Activated CD8-positive, alpha-beta T cell treated with anti-CD3 and anti-CD28 coated beads for 36 hours (primary cell): ENCODE measurements at regions of chr19 and their contacts with region 1.

Region 1: GRCh38 chr19:18058208-18059030 is 28.3 kb downstream of the IL12RB1 start:
- DNase-seq: peak; percentile 83
- ATAC-seq: peak; percentile 94
- H3K4me3 Mint-ChIP-seq: no peak overlapping the region
- H3K27ac Mint-ChIP-seq: peak overlapping the region; percentile 41
- H3K4me1 Mint-ChIP-seq: peaks cover 16% of the 10 kb centered on the region
- H3K27me3 Mint-ChIP-seq: no peaks in the 10 kb centered on the region
- CTCF ChIP-seq: peak; percentile 99

Region 2: DNA sequence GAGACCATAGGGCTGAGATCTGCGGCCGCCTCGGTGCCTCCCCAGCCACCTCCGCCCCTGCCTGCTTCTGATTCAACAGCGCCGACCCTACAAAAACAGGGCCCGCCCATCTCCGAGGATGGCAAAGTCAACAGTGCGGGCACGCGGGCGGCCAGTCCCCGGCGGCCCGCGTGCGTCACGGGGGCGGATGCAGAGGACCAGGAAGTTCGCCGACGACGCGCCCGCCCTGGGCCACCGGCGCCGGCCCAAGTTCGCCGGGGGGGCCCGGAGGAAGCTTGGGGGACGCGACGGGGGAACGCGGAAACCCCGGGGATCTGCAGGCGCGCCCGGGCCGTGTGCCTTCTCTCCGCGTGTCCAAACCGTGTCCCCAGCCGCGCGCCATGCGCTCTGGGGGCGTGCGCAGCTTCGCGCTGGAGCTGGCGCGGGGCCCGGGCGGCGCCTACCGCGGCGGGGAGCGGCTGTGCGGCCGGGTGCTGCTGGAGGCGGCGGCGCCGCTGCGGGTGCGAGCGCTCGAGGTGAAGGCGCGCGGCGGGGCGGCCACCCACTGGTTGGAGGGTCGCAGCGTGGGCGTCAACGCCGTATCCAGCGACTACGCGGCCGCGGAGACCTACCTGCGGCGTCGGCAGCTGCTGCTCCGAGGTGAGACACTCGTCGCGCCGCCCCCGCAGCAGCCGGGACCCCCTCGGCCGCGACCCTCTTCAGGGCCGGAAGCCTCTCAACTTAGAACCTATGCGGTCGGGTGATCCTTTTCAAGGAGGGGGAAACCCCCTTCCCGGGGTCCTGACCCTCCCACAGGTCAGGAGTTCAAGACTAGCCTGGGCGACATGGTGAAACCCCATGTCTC is 57.3 kb before region 1 on chr19:
- CTCF ChIA-PET with region 1: interaction called, 151 read pairs
- POLR2A ChIA-PET with region 1: interaction called, 24 read pairs
- intact Hi-C with region 1: no loop called
- DNase-seq: peak; percentile 98
- ATAC-seq: peak; percentile 86
- H3K4me3 Mint-ChIP-seq: peak overlapping the region; percentile 90
- H3K27ac Mint-ChIP-seq: peak overlapping the region; percentile 98
- H3K4me1 Mint-ChIP-seq: peaks cover 18% of the 10 kb centered on the region
- H3K27me3 Mint-ChIP-seq: no peaks in the 10 kb centered on the region
- CTCF ChIP-seq: no peak

Region 3: DNA sequence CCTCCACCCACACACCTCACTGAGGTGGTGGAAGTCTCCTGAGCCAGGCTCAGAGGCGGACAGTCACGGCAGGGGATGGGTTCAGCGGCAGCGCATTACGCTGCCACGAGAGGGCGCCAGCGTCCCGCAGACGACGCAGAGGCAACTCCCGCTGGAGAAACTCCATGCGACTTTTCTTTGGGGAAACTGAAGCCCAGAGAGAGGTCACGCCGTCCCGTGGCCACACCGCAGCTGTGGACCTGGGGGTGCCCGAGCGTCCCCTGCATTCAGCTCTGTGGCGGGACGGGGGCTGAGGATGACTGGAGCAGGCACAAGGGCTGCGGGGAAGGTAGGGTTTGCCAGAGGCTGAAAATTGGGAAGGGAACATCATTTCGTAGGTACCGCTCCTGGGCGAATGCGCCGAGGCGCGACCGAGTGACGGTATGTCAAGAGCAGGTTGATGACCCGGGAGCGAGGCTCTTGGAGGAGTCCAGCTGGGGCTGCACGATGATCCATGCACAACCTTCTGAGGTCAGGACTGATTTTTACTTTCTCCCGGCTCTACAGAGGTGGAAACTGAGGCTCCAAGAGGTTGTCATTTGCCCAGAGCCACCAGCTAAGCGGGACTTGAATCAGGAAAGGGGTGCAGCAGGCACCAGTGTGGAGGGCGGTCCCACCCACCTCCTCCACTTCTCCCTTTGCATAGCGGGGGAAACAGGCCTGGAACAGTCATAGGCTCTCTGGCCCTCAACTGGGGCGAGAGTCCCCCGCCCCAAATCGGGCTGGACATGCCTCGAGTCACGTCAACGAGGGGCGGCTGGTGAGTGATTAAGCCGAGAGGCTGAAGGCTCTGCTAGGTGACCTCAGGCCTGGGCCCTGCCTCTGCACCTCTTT is 51.1 kb before region 1 on chr19:
- CTCF ChIA-PET with region 1: interaction called, 151 read pairs
- POLR2A ChIA-PET with region 1: interaction called, 24 read pairs
- intact Hi-C with region 1: loop called (anchors 1 kb)
- DNase-seq: peak; percentile 85
- ATAC-seq: peak; percentile 65
- H3K4me3 Mint-ChIP-seq: peak overlapping the region; percentile 77
- H3K27ac Mint-ChIP-seq: peak overlapping the region; percentile 82
- H3K4me1 Mint-ChIP-seq: peaks cover 29% of the 10 kb centered on the region
- H3K27me3 Mint-ChIP-seq: no peaks in the 10 kb centered on the region
- CTCF ChIP-seq: peak; percentile 100

Region 4: DNA sequence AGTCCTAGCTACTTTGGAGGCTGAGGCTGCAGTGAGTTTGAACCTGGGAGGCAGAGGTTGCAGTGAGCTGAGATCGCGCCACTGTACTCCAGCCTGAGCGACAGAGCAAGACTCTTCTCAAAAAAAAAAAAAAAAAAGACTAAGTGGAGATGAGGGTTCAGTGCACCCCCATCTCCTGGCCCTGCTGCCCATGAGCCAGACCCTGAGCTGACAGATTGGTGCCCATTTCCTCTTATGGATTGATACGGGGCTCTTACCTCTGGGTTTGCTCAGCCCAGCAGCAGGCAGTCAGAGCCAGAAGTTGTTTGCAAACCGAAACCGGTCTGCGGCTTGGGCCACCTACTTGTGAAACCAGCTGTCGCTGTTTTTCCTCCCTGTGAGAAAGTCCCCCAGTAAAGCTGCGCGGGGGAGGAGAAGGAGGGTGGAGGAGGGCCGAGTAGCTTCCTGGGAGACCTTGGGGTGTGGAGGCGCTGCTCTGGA is 13.6 kb before region 1 on chr19:
- CTCF ChIA-PET with region 1: interaction called, 15 read pairs
- POLR2A ChIA-PET with region 1: interaction called, 6 read pairs
- intact Hi-C with region 1: no loop called
- DNase-seq: peak; percentile 98
- ATAC-seq: peak; percentile 93
- H3K4me3 Mint-ChIP-seq: peak overlapping the region; percentile 51
- H3K27ac Mint-ChIP-seq: peak overlapping the region; percentile 79
- H3K4me1 Mint-ChIP-seq: peaks cover 37% of the 10 kb centered on the region
- H3K27me3 Mint-ChIP-seq: peaks cover 2% of the 10 kb centered on the region
- CTCF ChIP-seq: no peak

Region 5: GRCh38 chr19:18070181-18070580 is 11.8 kb after region 1 on chr19:
- CTCF ChIA-PET with region 1: no interaction called
- POLR2A ChIA-PET with region 1: no interaction called
- intact Hi-C with region 1: no loop called
- DNase-seq: no peak
- ATAC-seq: no peak
- H3K4me3 Mint-ChIP-seq: no peak overlapping the region
- H3K27ac Mint-ChIP-seq: no peak overlapping the region
- H3K4me1 Mint-ChIP-seq: peaks cover 7% of the 10 kb centered on the region
- H3K27me3 Mint-ChIP-seq: no peaks in the 10 kb centered on the region
- CTCF ChIP-seq: no peak

Region 6: GRCh38 chr19:18274781-18275356 is 216.4 kb after region 1 on chr19:
- CTCF ChIA-PET with region 1: no interaction called
- POLR2A ChIA-PET with region 1: no interaction called
- intact Hi-C with region 1: no loop called
- DNase-seq: peak; percentile 32
- ATAC-seq: peak; percentile 6
- H3K4me3 Mint-ChIP-seq: no peak overlapping the region
- H3K27ac Mint-ChIP-seq: peak overlapping the region; percentile 63
- H3K4me1 Mint-ChIP-seq: peaks cover 31% of the 10 kb centered on the region
- H3K27me3 Mint-ChIP-seq: no peaks in the 10 kb centered on the region
- CTCF ChIP-seq: no peak